Activated B cell treated with CpG ODN at 0.5 μM for 24 hours (primary cell): ENCODE measurements at regions of chr1 and their contacts with region 1.

Region 1: GRCh38 chr1:158177700-158178450 is 2.8 kb upstream of the CD1D start:
- DNase-seq: peak; percentile 70
- ATAC-seq: peak; percentile 77
- H3K4me3 Mint-ChIP-seq: peak overlapping the region; percentile 78
- H3K27ac Mint-ChIP-seq: peak overlapping the region; percentile 81
- H3K4me1 Mint-ChIP-seq: peaks cover 80% of the 10 kb centered on the region
- H3K27me3 Mint-ChIP-seq: no peaks in the 10 kb centered on the region
- CTCF ChIP-seq: no peak

Region 2: GRCh38 chr1:158117854-158118704 is 59.8 kb before region 1 on chr1:
- CTCF ChIA-PET with region 1: interaction called, 6 read pairs
- POLR2A ChIA-PET with region 1: no interaction called
- intact Hi-C with region 1: loop called (anchors 1 kb)
- DNase-seq: peak; percentile 45
- ATAC-seq: peak; percentile 60
- H3K4me3 Mint-ChIP-seq: peak overlapping the region; percentile 64
- H3K27ac Mint-ChIP-seq: no peak overlapping the region
- H3K4me1 Mint-ChIP-seq: peaks cover 27% of the 10 kb centered on the region
- H3K27me3 Mint-ChIP-seq: peaks cover 20% of the 10 kb centered on the region
- CTCF ChIP-seq: no peak

Region 3: DNA sequence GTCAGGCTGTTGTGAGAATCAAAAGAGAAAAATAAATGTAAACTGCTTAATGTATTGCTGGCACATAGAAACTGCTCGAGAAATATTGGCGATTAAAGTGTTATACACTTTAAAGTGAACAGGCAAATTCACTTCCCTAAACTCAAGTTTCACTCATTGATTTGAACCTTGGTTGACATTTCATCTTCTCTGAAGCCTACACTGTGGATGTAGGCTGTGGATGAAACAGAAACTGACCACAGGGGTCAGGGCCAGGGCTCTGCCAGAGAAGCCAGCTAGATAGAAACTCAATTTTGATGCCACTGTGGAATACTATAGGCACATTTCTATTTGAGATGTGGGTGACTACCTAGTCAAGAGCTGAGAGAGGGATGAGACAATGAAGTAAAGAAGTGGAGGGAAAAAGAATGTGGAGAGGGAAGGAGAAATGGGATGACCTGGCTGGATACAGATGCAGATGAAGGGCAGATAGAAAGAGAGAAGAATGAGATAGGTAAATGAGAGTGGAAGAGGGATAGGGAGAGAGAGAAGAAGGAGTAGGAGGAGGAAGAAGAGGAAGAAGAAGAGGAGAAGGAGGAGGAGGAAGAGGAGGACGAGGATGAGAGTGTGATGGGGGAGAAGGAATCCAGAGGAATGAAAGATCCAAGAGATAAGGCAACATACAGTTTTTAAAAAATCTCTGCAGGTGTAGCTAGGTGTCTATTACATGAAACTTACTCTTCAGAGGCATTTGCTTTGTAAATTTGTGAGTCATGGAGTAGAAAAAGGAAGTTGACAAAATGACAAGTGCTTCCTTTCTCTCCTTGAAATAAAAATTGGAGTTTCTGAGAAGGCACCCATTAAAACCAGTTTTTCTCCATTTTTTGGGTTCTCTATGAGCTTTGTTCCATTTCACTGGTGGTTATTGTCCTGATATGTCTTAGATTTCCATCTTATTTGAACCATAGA is 14.6 kb before region 1 on chr1:
- CTCF ChIA-PET with region 1: interaction called, 19 read pairs
- POLR2A ChIA-PET with region 1: interaction called, 21 read pairs
- intact Hi-C with region 1: loop called (anchors 1 kb)
- DNase-seq: no peak
- ATAC-seq: peak; percentile 93
- H3K4me3 Mint-ChIP-seq: peak overlapping the region; percentile 68
- H3K27ac Mint-ChIP-seq: peak overlapping the region; percentile 74
- H3K4me1 Mint-ChIP-seq: peaks cover 57% of the 10 kb centered on the region
- H3K27me3 Mint-ChIP-seq: no peaks in the 10 kb centered on the region
- CTCF ChIP-seq: no peak

Region 4: DNA sequence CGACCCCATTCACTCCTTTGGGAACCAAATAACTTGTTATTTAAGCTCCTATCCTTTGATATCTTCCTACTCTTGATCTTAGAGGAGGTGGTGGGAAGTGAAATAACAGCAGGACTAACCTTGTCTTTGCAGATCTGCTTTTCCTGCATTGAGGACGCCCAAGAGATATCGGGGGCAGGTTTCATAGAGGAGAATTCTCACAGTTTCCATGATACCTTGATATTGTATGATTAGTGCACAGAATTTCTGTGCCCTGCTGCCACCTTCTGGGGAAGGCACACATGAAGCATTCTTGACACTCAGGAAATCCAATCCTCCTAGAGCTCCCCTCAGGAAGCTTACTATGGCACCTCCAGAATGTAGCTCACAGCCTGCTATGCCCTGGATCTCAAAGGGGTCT is 151.9 kb after region 1 on chr1:
- CTCF ChIA-PET with region 1: interaction called, 11 read pairs
- POLR2A ChIA-PET with region 1: no interaction called
- intact Hi-C with region 1: no loop called
- DNase-seq: no peak
- ATAC-seq: peak; percentile 47
- H3K4me3 Mint-ChIP-seq: no peak overlapping the region
- H3K27ac Mint-ChIP-seq: no peak overlapping the region
- H3K4me1 Mint-ChIP-seq: peaks cover 26% of the 10 kb centered on the region
- H3K27me3 Mint-ChIP-seq: no peaks in the 10 kb centered on the region
- CTCF ChIP-seq: no peak

Region 5: DNA sequence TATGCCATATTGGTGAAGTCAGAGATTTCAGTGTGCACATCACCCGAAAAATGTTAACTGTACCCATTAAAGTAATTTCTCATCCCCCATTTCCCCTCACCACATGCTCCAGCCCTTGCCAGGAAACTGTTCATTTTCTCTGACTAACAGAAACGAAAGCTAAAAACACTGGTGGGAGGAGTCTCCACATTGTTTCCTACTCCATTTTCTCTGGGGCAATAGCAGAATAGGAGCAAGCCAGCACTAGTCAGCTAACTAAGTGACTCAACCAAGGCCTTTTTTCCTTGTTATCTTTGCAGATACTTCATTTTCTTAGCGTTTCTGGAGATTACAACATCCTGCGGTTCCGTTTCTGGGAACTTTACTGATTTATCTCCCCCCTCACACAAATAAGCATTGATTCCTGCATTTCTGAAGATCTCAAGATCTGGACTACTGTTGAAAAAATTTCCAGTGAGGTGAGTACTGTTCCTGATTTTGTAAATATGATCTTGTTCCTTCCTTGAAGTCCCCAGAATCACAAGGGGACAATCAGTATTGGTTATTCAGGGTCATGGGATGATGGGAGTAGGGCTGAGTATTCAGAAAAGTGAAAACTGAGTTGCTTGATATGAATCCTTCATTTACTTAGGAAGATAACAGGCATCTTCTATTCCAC is 832.0 kb after region 1 on chr1 and contains the start of gene IFI16:
- CTCF ChIA-PET with region 1: no interaction called
- POLR2A ChIA-PET with region 1: interaction called, 4 read pairs
- intact Hi-C with region 1: loop called (anchors 2 kb)
- DNase-seq: no peak
- ATAC-seq: peak; percentile 61
- H3K4me3 Mint-ChIP-seq: peak within 1 kb of the TSS; percentile 91
- H3K27ac Mint-ChIP-seq: peak within 1 kb of the TSS; percentile 93
- H3K4me1 Mint-ChIP-seq: peaks cover 72% of the 10 kb centered on the region
- H3K27me3 Mint-ChIP-seq: no peaks in the 10 kb centered on the region
- CTCF ChIP-seq: no peak
- total RNA-seq, gene IFI16: 145 and 160 TPM in 2 replicates